ENCODE measurements at regions of chr12 and their contacts with region 1.

Region 1: GRCh38 chr12:118372541-118373495 is at the start of gene TAOK3:
- DNase-seq: peak; percentile 98
- H3K4me3 ChIP-seq: peak within 1 kb of the TSS; percentile 78 to 95 (median 79)
- H3K27ac ChIP-seq: peak within 1 kb of the TSS; percentile 17
- H3K4me1 ChIP-seq: peaks cover 18% of the 10 kb centered on the region
- H3K27me3 ChIP-seq: no peaks in the 10 kb centered on the region
- CTCF ChIP-seq: no peak
- POLR2A ChIP-seq: peak; percentile 97
- total RNA-seq, gene TAOK3: 23.1 and 28.9 TPM in 2 replicates

Region 2: DNA sequence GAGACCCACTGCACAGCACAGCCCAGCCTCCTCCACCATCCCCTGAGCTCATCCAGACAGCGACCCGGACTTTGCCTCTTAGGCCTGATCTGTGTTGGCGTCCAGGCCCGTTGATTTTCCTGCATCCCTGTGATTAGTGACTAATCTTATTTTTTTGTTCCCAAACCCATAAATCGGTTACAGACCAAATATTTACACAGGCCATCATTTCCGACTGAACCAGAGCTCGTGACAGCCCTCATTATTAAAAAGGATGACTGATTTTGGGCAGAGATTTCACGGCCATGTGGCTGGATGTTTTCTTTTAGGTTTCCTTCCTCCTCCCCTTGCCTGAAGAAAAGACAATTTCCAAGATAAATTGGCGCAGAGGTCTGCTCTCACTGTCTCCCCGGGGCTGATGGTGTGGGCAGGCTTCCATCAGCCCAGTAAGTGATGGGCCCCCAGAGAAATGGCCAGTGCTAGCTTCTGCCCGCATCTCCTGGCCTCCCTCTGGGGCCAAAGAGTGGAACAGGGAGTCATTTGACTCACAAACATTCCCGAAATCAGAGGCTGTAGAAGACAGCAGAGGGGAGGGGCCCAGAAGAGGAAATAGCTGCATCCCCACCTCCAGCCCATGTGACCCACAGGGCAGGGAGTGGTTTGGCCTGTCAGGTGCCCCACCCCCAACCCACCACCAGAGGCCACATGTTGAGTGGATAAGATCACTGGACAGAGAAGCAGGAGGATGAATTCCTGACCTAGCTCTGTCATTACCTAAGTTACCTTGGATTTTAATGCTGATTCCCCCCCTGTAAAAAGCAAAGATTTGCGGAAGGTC is 687.5 kb before region 1 on chr12:
- CTCF ChIA-PET with region 1: no interaction called
- POLR2A ChIA-PET with region 1: no interaction called
- dilution Hi-C with region 1: no loop called
- intact Hi-C with region 1: loop called (anchors 10 kb)
- DNase-seq: peak; percentile 97
- H3K4me3 ChIP-seq: no peak overlapping the region
- H3K27ac ChIP-seq: peak overlapping the region; percentile 98
- H3K4me1 ChIP-seq: peaks cover 51% of the 10 kb centered on the region
- H3K27me3 ChIP-seq: no peaks in the 10 kb centered on the region
- CTCF ChIP-seq: no peak
- POLR2A ChIP-seq: no peak

Region 3: GRCh38 chr12:118055144-118055557 is 317.7 kb before region 1 on chr12:
- CTCF ChIA-PET with region 1: interaction called, 3 read pairs
- POLR2A ChIA-PET with region 1: no interaction called
- dilution Hi-C with region 1: no loop called
- intact Hi-C with region 1: loop called (anchors 2 kb)
- DNase-seq: peak; percentile 61
- H3K4me3 ChIP-seq: no peak overlapping the region
- H3K27ac ChIP-seq: no peak overlapping the region
- H3K4me1 ChIP-seq: peaks cover 36% of the 10 kb centered on the region
- H3K27me3 ChIP-seq: no peaks in the 10 kb centered on the region
- CTCF ChIP-seq: peak; percentile 58 to 68
- POLR2A ChIP-seq: no peak

Region 4: GRCh38 chr12:118164798-118165486 is 207.9 kb before region 1 on chr12:
- CTCF ChIA-PET with region 1: interaction called, 97 read pairs
- POLR2A ChIA-PET with region 1: no interaction called
- dilution Hi-C with region 1: no loop called
- intact Hi-C with region 1: loop called (anchors 1 kb)
- DNase-seq: peak; percentile 53
- H3K4me3 ChIP-seq: no peak overlapping the region
- H3K27ac ChIP-seq: no peak overlapping the region
- H3K4me1 ChIP-seq: no peaks in the 10 kb centered on the region
- H3K27me3 ChIP-seq: no peaks in the 10 kb centered on the region
- CTCF ChIP-seq: peak; percentile 52 to 58
- POLR2A ChIP-seq: no peak

Region 5: DNA sequence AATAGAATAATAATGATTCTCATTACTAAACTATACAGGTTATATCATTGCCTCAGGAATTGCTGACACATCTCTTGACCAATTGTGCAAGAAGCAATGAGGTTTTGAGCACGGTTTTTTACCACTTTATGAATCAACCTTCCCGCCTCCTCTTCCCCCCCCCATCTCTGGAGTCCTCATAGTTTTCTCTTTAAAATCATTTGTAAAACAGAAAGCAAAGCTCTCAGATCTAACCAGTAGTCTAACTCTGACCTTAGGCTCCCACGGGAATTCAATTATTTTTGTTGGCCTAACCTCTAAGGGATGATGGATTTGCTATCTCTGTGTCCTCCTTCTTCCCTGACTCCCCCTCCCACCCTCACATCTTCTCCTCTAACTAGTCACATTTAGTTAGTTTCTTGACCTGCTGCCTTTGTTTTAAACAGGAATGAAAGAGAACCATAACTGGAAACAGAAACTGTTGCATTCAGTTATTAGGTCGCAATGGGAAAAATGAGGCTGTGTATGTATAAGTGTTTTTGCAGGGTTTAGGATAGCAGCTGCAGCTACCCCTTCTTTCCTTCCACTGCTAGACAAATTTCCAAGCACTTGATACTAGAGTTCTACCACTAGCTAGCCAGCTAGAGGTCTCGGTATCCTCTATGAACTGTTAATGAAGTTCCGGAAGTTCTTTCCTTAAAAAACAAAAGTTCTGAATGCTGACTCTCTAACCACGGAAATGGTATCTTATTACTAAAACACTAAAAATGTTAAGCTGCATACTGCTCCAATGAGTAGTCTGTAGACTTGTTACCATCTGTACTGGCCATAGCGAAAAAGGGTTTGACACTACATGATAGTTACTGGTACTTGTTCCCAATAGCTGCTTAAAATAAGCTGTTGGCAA is 65.5 kb before region 1 on chr12:
- CTCF ChIA-PET with region 1: interaction called, 23 read pairs
- POLR2A ChIA-PET with region 1: interaction called, 6 read pairs
- dilution Hi-C with region 1: no loop called
- intact Hi-C with region 1: loop called (anchors 1 kb)
- DNase-seq: peak; percentile 63
- H3K4me3 ChIP-seq: peak overlapping the region in 2 of 3 experiments; percentile 33 to 40
- H3K27ac ChIP-seq: peak overlapping the region; percentile 88
- H3K4me1 ChIP-seq: peaks cover 22% of the 10 kb centered on the region
- H3K27me3 ChIP-seq: no peaks in the 10 kb centered on the region
- CTCF ChIP-seq: no peak
- POLR2A ChIP-seq: no peak

Region 6: GRCh38 chr12:118404876-118405521 is 32.2 kb after region 1 on chr12:
- CTCF ChIA-PET with region 1: interaction called, 14 read pairs
- POLR2A ChIA-PET with region 1: no interaction called
- dilution Hi-C with region 1: no loop called
- intact Hi-C with region 1: no loop called
- DNase-seq: peak; percentile 77
- H3K4me3 ChIP-seq: no peak overlapping the region
- H3K27ac ChIP-seq: no peak overlapping the region
- H3K4me1 ChIP-seq: no peaks in the 10 kb centered on the region
- H3K27me3 ChIP-seq: no peaks in the 10 kb centered on the region
- CTCF ChIP-seq: peak; percentile 55 to 69
- POLR2A ChIP-seq: no peak

Measured in endothelial cell of umbilical vein (primary cell).